Naive thymus-derived CD4-positive, alpha-beta T cell (primary cell): ENCODE measurements at regions of chr10 and their contacts with region 1.

Region 1: DNA sequence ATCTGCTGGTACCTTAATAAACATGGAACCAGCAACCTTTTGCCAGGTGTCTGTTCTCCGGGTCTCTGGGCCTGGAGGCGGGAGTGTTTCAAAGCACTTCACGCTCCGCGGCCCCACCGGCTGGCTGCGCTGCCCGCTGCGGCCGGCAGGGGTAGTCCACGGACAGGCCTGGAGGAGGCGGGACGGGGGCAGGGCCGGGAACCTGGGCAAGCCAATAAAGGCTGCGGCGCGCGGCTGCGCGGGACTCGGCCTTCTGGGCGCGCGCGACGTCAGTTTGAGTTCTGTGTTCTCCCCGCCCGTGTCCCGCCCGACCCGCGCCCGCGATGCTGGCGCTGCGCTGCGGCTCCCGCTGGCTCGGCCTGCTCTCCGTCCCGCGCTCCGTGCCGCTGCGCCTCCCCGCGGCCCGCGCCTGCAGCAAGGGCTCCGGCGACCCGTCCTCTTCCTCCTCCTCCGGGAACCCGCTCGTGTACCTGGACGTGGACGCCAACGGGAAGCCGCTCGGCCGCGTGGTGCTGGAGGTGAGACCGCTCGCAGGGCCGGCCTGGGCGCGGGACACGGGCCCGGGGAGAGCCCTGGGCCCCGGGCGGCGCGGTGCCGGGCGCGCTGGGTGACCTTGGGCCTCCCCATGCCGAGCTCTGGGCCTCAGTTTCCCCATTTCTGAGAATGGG is at the start of gene PPIF:
- DNase-seq: peak; percentile 79 to 99 (median 90)
- ATAC-seq: peak; percentile 96
- H3K4me3 ChIP-seq: peak within 1 kb of the TSS; percentile 72
- H3K4me3 Mint-ChIP-seq: peak within 1 kb of the TSS; percentile 71 to 92 (median 78)
- H3K27ac ChIP-seq: peak within 1 kb of the TSS; percentile 73
- H3K27ac Mint-ChIP-seq: peak within 1 kb of the TSS; percentile 76 to 96 (median 86)
- H3K4me1 ChIP-seq: peaks cover 19 to 25% of the 10 kb centered on the region in 2 donors
- H3K4me1 Mint-ChIP-seq: peaks cover 9 to 50% (median 19%) of the 10 kb centered on the region in 7 donors
- H3K27me3 ChIP-seq: no peaks in the 10 kb centered on the region
- H3K27me3 Mint-ChIP-seq: no peaks in the 10 kb centered on the region
- total RNA-seq, gene PPIF: 20.6 to 192 (median 73.3) TPM

Region 2: DNA sequence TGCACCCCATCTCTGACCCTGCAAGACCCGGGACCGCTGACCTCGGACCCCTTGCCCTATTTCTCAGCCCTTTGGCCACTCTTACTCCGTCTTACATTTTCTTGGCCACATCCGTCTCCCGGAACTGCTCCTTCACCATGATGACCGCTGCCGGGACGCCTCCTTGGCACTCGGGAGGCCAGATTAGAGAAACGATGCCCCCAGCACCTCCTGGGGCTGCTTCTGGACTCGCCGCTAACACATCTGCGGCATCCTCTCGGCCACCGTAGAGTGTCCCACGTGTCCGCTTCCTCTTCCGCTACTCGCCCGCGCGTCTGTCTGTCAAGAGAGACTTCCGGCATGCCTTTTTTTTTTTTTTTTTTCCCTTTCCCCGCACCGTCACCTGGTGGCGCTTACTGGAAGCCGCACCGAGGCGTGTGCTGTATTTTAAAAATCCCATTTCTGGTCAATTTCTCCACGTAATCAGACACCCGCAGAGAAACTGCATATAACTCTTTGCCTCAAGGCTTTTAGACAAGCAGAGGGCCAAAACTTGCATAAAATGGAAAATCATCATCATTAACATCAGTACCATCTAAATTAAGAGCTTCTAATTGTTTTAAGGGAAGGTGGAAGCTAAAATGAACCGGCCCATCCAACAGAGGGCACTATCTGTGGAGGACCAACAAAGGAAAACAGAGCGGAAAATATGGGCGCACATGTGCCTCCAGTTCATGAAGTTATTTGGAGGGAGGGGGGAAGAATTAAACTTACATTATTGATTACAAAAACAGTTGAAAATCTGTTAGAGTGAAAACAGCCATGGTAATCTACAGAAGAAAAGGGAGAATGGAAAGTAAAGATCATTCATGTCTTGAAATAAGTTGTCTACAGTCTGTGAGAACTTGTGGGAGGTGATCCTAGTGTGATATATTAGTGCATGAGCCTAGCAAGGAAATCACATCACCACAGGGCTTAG is 1317.8 kb before region 1 on chr10 and contains the start of gene POLR3A:
- CTCF ChIA-PET with region 1: no interaction called
- POLR2A ChIA-PET with region 1: interaction called, 4 read pairs
- intact Hi-C with region 1: loop called (anchors 1 kb)
- DNase-seq: peak; percentile 79 to 94 (median 90)
- ATAC-seq: peak; percentile 77
- H3K4me3 ChIP-seq: peak within 1 kb of the TSS; percentile 99
- H3K4me3 Mint-ChIP-seq: peak within 1 kb of the TSS; percentile 92 to 100 (median 99)
- H3K27ac ChIP-seq: peak within 1 kb of the TSS; percentile 89
- H3K27ac Mint-ChIP-seq: peak within 1 kb of the TSS; percentile 88 to 99 (median 95)
- H3K4me1 ChIP-seq: peaks cover 12 to 19% of the 10 kb centered on the region in 2 donors
- H3K4me1 Mint-ChIP-seq: peaks cover 22 to 50% (median 37%) of the 10 kb centered on the region in 7 donors
- H3K27me3 ChIP-seq: no peaks in the 10 kb centered on the region
- H3K27me3 Mint-ChIP-seq: no peaks in the 10 kb centered on the region
- total RNA-seq, gene POLR3A: 12.0 to 20.9 (median 19.0) TPM

Region 3: DNA sequence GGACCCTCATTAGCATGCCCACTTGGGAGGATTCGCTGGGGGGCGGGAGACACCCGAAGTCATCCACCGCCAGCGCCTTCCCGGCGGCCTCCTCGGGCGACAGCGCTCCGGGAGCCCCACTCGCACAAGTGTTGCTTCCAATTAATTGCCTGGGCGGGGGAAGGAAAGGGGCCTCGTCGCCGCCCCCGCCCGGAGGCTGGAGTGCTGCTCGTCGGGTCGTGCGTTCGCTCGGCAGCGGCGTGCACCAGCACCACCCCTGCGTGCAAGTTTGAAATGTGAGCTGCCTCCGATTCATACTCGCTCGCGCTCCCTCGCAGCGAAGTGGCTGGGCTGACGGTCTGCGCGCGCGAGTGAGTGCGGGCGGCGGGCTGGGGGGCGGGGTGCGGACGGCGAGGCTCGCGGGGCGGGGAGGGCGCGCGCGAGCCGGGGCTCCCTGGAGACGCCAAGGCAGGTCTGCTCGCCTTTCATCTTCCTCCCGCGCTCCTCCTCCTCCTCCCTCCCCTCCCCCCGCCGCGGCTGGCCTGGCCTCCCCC is 104.7 kb before region 1 on chr10:
- CTCF ChIA-PET with region 1: interaction called, 3 read pairs
- POLR2A ChIA-PET with region 1: no interaction called
- intact Hi-C with region 1: loop called (anchors 1 kb)
- DNase-seq: peak; percentile 6 to 71 (median 35)
- ATAC-seq: peak; percentile 39
- H3K4me3 ChIP-seq: peak overlapping the region; percentile 37
- H3K4me3 Mint-ChIP-seq: peak overlapping the region; percentile 43 to 87 (median 77)
- H3K27ac ChIP-seq: no peak overlapping the region
- H3K27ac Mint-ChIP-seq: peak overlapping the region in 1 of 9 donors; percentile 80
- H3K4me1 ChIP-seq: peaks cover 27 to 38% of the 10 kb centered on the region in 2 donors
- H3K4me1 Mint-ChIP-seq: peaks cover 39 to 58% (median 41%) of the 10 kb centered on the region in 7 donors
- H3K27me3 ChIP-seq: no peaks in the 10 kb centered on the region
- H3K27me3 Mint-ChIP-seq: no peaks in the 10 kb centered on the region

Region 4: DNA sequence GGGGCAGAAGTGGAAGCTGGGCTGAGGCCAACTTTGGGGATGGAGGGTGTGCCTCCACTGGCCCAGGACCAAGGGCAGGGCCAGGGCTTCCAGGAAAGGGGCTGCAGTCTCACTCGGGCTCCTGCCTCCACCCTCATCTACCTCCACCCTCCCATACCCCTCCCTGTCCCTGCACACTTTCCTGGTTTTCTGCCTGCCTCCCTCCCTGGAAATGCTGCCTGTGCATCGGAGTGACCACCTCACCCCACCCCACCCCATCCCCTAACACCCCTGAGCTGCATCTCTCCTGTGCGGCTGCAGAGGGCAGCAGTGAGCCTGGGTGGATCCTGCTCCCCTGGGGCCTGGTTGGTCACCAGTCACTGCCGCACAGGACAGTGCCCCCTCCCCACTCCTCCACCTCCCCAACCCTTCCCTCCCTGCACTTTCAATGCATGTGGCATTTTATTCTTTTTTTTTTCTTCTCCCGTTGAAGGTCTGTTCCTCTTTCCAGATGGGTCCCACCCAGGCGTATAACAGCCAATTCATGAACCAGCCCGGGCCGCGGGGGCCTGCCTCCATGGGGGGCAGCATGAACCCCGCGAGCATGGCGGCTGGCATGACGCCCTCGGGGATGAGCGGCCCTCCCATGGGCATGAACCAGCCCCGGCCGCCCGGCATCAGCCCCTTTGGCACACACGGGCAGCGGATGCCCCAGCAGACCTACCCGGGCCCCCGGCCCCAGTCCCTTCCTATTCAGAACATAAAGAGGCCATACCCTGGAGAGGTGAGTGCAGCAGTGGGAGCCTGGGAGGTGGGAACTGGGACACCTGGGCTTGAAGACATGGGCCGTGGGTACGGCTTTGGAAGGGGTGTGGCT is 54.2 kb before region 1 on chr10:
- CTCF ChIA-PET with region 1: interaction called, 4 read pairs
- POLR2A ChIA-PET with region 1: interaction called, 3 read pairs
- intact Hi-C with region 1: loop called (anchors 1 kb)
- DNase-seq: peak in 2 of 9 donors; percentile 10 to 25
- ATAC-seq: peak; percentile 57
- H3K4me3 ChIP-seq: no peak overlapping the region
- H3K4me3 Mint-ChIP-seq: no peak overlapping the region
- H3K27ac ChIP-seq: no peak overlapping the region
- H3K27ac Mint-ChIP-seq: no peak overlapping the region
- H3K4me1 ChIP-seq: no peaks in the 10 kb centered on the region
- H3K4me1 Mint-ChIP-seq: peaks cover 0 to 40% (median 5%) of the 10 kb centered on the region in 7 donors
- H3K27me3 ChIP-seq: no peaks in the 10 kb centered on the region
- H3K27me3 Mint-ChIP-seq: no peaks in the 10 kb centered on the region

Region 5: DNA sequence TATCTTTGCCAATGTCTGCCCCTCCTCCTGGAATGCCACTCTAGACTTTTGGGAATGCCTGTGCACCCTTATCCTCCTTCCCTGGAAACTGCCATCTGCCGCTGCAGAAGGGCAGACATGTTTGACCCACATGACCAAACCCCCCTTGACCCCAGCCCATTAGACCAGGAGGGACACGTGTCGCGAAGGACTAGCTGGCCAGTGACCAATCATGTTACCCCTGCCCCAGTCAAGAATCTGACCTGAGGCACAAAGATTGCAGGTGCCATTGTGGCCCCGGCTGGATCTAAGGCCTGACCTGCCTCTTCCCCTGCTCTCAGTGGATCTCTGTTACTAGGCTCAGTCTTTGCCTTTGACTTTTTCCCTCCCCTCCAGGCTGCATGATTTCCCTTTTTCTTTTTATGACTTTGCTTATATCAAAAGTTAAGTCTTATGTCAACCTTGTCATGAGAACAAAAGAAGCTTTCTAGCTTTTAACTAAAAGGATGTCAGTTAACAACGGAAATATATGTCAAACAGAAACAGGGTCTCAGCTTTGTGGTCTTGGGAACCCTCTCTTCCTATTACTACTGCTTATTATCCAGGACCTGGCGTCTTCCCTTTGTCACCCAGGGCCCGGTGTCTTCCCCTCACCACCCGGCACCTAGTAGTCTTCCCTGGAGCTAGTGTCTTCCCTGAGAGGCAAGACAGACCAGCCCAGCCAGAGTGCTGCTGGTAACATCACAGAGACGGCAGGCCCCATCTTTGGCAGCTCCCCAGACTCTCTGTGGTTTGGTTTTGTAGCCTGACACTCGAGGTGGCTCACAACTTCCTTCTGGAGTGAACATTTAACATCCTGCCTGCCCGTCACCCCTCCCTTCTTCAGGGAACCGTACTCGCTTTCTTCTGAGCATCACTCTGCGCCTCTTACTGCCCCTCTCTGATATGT is 24.5 kb before region 1 on chr10:
- CTCF ChIA-PET with region 1: interaction called, 7 read pairs
- POLR2A ChIA-PET with region 1: interaction called, 22 read pairs
- intact Hi-C with region 1: loop called (anchors 1 to 2 kb)
- DNase-seq: peak; percentile 53 to 92 (median 90)
- ATAC-seq: peak; percentile 90
- H3K4me3 ChIP-seq: peak overlapping the region; percentile 20
- H3K4me3 Mint-ChIP-seq: peak overlapping the region; percentile 70 to 88 (median 80)
- H3K27ac ChIP-seq: peak overlapping the region; percentile 65
- H3K27ac Mint-ChIP-seq: peak overlapping the region; percentile 77 to 99 (median 94)
- H3K4me1 ChIP-seq: peaks cover 58 to 63% of the 10 kb centered on the region in 2 donors
- H3K4me1 Mint-ChIP-seq: peaks cover 50 to 74% (median 68%) of the 10 kb centered on the region in 7 donors
- H3K27me3 ChIP-seq: no peaks in the 10 kb centered on the region
- H3K27me3 Mint-ChIP-seq: no peaks in the 10 kb centered on the region

Region 6: GRCh38 chr10:79374312-79375191 is 27.2 kb after region 1 on chr10:
- CTCF ChIA-PET with region 1: interaction called, 5 read pairs
- POLR2A ChIA-PET with region 1: no interaction called
- intact Hi-C with region 1: loop called in 1 of 2 experiments (anchors 1 kb)
- DNase-seq: peak; percentile 39 to 78 (median 67)
- ATAC-seq: peak; percentile 85
- H3K4me3 ChIP-seq: no peak overlapping the region
- H3K4me3 Mint-ChIP-seq: no peak overlapping the region
- H3K27ac ChIP-seq: no peak overlapping the region
- H3K27ac Mint-ChIP-seq: peak overlapping the region in 1 of 9 donors; percentile 42
- H3K4me1 ChIP-seq: peaks cover 0 to 5% of the 10 kb centered on the region in 2 donors
- H3K4me1 Mint-ChIP-seq: peaks cover 0 to 11% (median 4%) of the 10 kb centered on the region in 7 donors
- H3K27me3 ChIP-seq: no peaks in the 10 kb centered on the region
- H3K27me3 Mint-ChIP-seq: peaks cover 0 to 30% (median 0%) of the 10 kb centered on the region in 5 donors

Region 7: GRCh38 chr10:79400146-79401004 is 53.0 kb after region 1 on chr10:
- CTCF ChIA-PET with region 1: no interaction called
- POLR2A ChIA-PET with region 1: no interaction called
- intact Hi-C with region 1: no loop called
- DNase-seq: peak in 6 of 9 donors; percentile 8 to 68 (median 16)
- ATAC-seq: peak; percentile 63
- H3K4me3 ChIP-seq: no peak overlapping the region
- H3K4me3 Mint-ChIP-seq: no peak overlapping the region
- H3K27ac ChIP-seq: no peak overlapping the region
- H3K27ac Mint-ChIP-seq: no peak overlapping the region
- H3K4me1 ChIP-seq: no peaks in the 10 kb centered on the region
- H3K4me1 Mint-ChIP-seq: peaks cover 0 to 11% (median 6%) of the 10 kb centered on the region in 7 donors
- H3K27me3 ChIP-seq: no peaks in the 10 kb centered on the region
- H3K27me3 Mint-ChIP-seq: peaks cover 0 to 4% (median 0%) of the 10 kb centered on the region in 5 donors

Region 8: DNA sequence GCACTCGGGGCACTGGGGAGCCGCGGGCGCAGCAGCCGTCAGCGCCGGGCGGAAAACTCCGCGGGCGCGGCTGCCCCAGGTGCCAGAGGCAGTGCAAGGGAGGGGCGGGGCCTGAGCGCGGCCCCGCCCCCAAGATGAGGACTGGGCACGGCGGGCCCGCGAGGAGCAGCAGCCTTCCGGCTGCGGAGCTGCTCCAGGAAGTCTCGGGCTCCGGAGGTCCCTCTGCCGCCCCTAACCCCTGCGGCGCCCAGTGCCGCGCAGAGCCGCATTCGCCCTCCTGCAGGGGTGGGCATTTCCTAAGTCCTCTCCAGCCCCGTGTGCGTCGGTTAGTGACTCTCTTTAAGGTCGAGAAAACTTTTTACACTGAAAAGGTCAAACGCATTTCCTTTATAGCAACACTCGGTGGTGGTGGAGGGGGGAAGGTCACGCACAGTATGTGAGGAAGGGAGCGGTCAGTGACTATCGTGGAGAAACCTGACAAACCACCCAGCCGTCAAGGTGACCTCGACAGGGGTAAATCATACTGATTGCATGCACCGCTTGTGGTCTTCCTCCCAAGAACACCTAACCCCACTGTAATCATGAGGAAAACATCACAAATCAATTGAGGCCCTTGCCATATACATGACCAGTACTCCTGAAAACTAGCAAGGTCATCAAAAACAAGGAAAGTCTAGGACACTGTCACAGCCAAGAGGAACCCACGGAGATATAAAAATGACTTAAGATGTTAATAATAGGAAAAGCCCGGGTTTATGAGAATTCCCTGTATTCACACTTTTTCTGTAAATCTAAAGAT is 858.3 kb after region 1 on chr10 and contains the start of gene ANXA11:
- CTCF ChIA-PET with region 1: no interaction called
- POLR2A ChIA-PET with region 1: no interaction called
- intact Hi-C with region 1: loop called (anchors 5 to 10 kb)
- DNase-seq: peak; percentile 76 to 85 (median 81)
- ATAC-seq: peak; percentile 91
- H3K4me3 ChIP-seq: peak within 1 kb of the TSS; percentile 90
- H3K4me3 Mint-ChIP-seq: peak within 1 kb of the TSS; percentile 83 to 93 (median 88)
- H3K27ac ChIP-seq: peak within 1 kb of the TSS; percentile 94
- H3K27ac Mint-ChIP-seq: peak within 1 kb of the TSS; percentile 89 to 98 (median 96)
- H3K4me1 ChIP-seq: peaks cover 34 to 36% of the 10 kb centered on the region in 2 donors
- H3K4me1 Mint-ChIP-seq: peaks cover 41 to 69% (median 48%) of the 10 kb centered on the region in 7 donors
- H3K27me3 ChIP-seq: no peaks in the 10 kb centered on the region
- H3K27me3 Mint-ChIP-seq: no peaks in the 10 kb centered on the region
- total RNA-seq, gene ANXA11: 189 to 247 (median 231) TPM